ENCODE measurements at regions of chr19 and their contacts with region 1.

Region 1: GRCh38 chr19:49097455-49098288 is 12.4 kb downstream of the SNRNP70 start:
- DNase-seq: peak; percentile 82
- ATAC-seq: peak; percentile 89
- H3K4me3 Mint-ChIP-seq: no peak overlapping the region
- H3K27ac Mint-ChIP-seq: peak overlapping the region; percentile 85
- H3K4me1 Mint-ChIP-seq: peaks cover 13% of the 10 kb centered on the region
- H3K27me3 Mint-ChIP-seq: no peaks in the 10 kb centered on the region
- CTCF ChIP-seq: peak; percentile 98

Region 2: DNA sequence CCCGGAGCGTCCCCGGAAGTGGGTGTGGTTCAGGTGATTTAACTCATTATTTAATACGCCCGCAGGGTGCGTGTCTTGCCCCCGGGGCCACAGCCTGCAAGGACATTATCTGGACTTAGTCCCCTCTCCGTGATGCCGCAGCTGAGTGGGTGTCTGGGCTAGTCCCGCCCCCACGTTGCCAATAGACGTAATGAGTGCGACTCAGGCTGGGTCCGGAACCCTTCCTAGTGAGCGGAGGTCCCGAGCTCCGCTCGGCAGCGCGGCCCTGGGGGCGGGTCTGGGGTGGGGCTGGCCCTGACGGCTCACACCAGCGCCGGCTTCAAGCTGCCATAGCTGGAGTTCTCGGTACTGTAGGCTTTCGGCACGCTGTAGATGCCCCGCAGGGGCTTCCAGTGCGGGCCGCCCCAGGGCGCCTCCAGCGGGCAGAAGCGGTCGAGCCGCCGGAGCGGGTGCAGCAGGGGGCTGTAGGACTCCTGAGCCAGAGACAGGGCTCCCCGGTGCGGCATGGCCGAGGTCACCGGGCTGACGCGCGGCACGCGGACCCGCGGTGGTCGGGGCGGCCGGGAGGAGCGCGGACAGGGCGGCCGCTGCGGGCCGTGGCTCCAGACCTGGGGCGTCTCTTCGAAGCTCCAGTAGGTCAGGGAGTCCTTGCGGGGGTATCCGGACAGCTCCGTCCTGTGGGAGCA is 79.9 kb before region 1 on chr19:
- CTCF ChIA-PET with region 1: interaction called, 20 read pairs
- POLR2A ChIA-PET with region 1: no interaction called
- DNase-seq: peak; percentile 66
- ATAC-seq: peak; percentile 71
- H3K4me3 Mint-ChIP-seq: peak overlapping the region; percentile 73
- H3K27ac Mint-ChIP-seq: no peak overlapping the region
- H3K4me1 Mint-ChIP-seq: peaks cover 23% of the 10 kb centered on the region
- H3K27me3 Mint-ChIP-seq: peaks cover 45% of the 10 kb centered on the region
- CTCF ChIP-seq: no peak

Region 3: DNA sequence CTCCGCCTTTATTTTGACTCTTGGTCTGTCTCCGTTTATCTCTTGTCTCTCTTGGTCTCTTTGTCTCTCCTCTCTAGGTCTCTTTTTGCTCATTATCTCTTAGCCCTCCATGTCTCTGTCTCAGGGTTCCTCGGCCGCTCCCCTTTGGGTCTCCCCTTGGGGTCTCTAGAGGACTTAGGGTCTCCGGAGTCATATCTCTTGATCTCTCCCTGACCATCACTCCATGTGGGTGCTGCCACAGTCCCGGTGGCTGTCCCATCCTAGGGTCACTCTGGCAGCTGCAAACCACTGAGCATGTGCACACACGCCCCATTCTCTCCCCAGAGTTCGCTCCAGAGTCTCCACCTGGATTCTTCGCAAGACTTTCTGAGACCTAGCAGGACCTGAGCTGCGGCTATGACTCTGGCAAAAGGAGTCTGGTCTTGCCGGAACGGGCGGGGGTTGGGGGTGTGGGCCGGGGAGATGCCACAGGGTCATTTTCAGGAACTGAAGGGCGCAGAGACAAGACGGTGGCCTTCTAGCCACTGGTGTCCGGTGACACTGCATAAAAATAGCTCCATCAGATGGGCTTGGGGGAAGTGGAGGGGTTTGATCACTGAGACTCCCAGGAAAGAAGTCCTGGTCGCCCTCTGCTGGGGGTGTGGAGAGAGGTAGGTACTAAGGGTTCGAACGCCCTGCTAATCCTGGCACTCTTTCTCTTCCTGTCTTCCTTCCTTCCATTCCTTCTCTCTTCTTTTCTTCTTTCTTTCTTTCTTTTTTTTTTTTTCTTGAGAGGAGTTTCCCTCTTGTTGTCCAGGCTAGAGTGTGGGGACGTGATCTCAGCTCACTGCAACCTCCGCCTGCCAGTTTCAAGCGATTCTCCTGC is 23.9 kb before region 1 on chr19:
- CTCF ChIA-PET with region 1: interaction called, 18 read pairs
- POLR2A ChIA-PET with region 1: interaction called, 9 read pairs
- DNase-seq: peak; percentile 68
- ATAC-seq: peak; percentile 23; the same call in 1 of the 2 replicates
- H3K4me3 Mint-ChIP-seq: peak overlapping the region; percentile 68
- H3K27ac Mint-ChIP-seq: no peak overlapping the region
- H3K4me1 Mint-ChIP-seq: peaks cover 8% of the 10 kb centered on the region; the same call in 1 of the 2 replicates
- H3K27me3 Mint-ChIP-seq: peaks cover 78% of the 10 kb centered on the region
- CTCF ChIP-seq: no peak; the same call in 1 of the 2 replicates

Region 4: GRCh38 chr19:49127674-49128544 is 30.2 kb after region 1 on chr19:
- CTCF ChIA-PET with region 1: interaction called, 25 read pairs
- POLR2A ChIA-PET with region 1: no interaction called
- DNase-seq: peak; percentile 98
- ATAC-seq: peak; percentile 90
- H3K4me3 Mint-ChIP-seq: peak overlapping the region; percentile 89
- H3K27ac Mint-ChIP-seq: peak overlapping the region; percentile 97
- H3K4me1 Mint-ChIP-seq: peaks cover 25% of the 10 kb centered on the region
- H3K27me3 Mint-ChIP-seq: peaks cover 66% of the 10 kb centered on the region
- CTCF ChIP-seq: no peak

Region 5: DNA sequence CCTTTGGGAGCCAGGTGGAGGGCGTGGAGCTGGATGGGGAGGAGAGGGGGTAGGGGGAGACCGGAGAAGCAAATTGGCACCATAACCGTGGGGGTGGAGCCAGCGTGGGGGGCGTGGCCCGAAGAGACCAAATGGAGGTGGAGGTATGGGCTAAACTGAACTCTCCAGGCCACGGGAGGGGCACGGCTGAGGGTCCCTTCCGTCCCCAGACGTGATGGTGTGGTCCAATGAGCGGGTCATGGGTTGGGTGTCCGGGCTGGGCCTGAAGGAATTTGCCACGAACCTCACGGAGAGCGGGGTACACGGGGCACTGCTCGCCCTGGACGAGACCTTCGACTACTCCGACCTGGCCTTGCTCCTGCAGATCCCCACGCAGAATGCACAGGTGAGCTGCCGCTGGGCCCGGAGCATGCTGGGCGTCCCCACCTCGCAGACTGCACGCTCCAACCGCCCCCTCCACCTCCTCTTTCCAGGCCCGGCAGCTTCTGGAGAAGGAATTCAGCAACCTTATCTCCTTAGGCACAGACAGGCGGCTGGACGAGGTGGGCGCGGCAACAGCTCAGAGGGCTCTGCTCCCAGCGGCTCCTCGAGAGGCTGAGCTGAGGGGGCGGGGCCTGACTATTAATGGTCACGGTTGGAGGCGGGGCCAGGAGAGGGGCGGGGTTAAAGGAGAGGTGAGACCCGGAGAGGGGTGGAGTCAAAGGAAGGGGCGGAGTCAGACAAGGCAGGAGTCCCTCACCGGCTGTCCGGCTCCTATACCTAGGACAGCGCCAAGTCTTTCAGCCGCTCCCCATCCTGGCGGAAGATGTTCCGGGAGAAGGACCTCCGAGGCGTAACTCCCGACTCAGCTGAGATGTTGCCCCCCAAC is 51.3 kb after region 1 on chr19:
- CTCF ChIA-PET with region 1: interaction called, 53 read pairs
- POLR2A ChIA-PET with region 1: interaction called, 5 read pairs
- DNase-seq: peak; percentile 100
- ATAC-seq: peak; percentile 57
- H3K4me3 Mint-ChIP-seq: peak overlapping the region; percentile 92
- H3K27ac Mint-ChIP-seq: peak overlapping the region; percentile 91
- H3K4me1 Mint-ChIP-seq: peaks cover 33% of the 10 kb centered on the region
- H3K27me3 Mint-ChIP-seq: peaks cover 42% of the 10 kb centered on the region
- CTCF ChIP-seq: no peak

Region 6: GRCh38 chr19:49224856-49225255 is 127.2 kb after region 1 on chr19:
- CTCF ChIA-PET with region 1: interaction called, 37 read pairs
- POLR2A ChIA-PET with region 1: no interaction called
- DNase-seq: peak; percentile 79
- ATAC-seq: peak; percentile 82
- H3K4me3 Mint-ChIP-seq: no peak overlapping the region
- H3K27ac Mint-ChIP-seq: no peak overlapping the region
- H3K4me1 Mint-ChIP-seq: peaks cover 2% of the 10 kb centered on the region; the same call in 1 of the 2 replicates
- H3K27me3 Mint-ChIP-seq: peaks cover 8% of the 10 kb centered on the region
- CTCF ChIP-seq: peak; percentile 43